ENCODE measurements at regions of chr3 and their contacts with region 1.

Region 1: GRCh38 chr3:377158-377561 is 180.6 kb downstream of the CHL1 start:
- DNase-seq: no peak
- ATAC-seq: peak; percentile 52
- H3K4me3 Mint-ChIP-seq: no peak overlapping the region
- H3K27ac Mint-ChIP-seq: no peak overlapping the region
- H3K4me1 Mint-ChIP-seq: peaks cover 2% of the 10 kb centered on the region
- H3K27me3 Mint-ChIP-seq: peaks cover 3% of the 10 kb centered on the region
- CTCF ChIP-seq: no peak

Region 2: GRCh38 chr3:46576-46975 is 330.6 kb before region 1 on chr3:
- CTCF ChIA-PET with region 1: interaction called, 18 read pairs
- POLR2A ChIA-PET with region 1: no interaction called
- intact Hi-C with region 1: loop called (anchors 1 kb)
- DNase-seq: no peak
- ATAC-seq: no peak
- H3K4me3 Mint-ChIP-seq: no peak overlapping the region
- H3K27ac Mint-ChIP-seq: no peak overlapping the region
- H3K4me1 Mint-ChIP-seq: no peaks in the 10 kb centered on the region
- H3K27me3 Mint-ChIP-seq: no peaks in the 10 kb centered on the region
- CTCF ChIP-seq: no peak

Region 3: DNA sequence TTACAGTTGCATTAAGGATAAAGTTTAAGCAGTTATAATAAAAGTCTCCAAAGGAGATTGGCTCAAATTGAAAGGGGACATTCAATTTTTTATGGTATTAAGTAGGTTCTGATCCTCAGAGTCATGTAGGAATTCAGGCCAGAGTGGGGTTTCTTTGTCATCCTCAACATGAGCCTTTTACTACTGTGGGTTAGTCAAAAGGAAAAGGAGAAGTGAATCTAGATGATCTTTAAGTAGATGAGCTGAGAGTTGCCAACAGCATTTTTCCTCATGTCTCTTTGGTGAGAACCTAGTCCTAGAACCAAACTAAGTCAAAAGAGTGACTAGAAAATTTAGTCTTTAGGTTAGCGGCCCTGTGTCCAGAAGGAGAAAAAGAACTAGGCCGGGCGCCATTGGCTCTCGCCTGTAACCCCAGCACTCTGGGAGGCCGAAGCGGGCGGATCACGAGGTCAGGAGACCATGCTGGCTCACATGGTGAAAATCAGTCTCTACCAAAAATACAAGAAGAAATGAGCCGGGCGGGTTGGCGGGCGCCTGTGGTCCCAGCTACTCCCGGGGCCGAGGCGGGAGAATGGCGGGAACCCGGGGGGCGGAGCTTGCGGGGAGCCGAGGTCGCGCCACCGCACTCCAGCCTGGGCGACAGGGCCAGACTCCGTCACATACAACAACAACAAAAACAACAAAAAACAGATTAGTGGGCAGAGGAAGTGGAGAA is 184.8 kb before region 1 on chr3:
- CTCF ChIA-PET with region 1: no interaction called
- POLR2A ChIA-PET with region 1: no interaction called
- intact Hi-C with region 1: no loop called
- DNase-seq: no peak
- ATAC-seq: peak; percentile 71
- H3K4me3 Mint-ChIP-seq: peak overlapping the region; percentile 50
- H3K27ac Mint-ChIP-seq: peak overlapping the region; percentile 79
- H3K4me1 Mint-ChIP-seq: peaks cover 13% of the 10 kb centered on the region
- H3K27me3 Mint-ChIP-seq: peaks cover 9% of the 10 kb centered on the region
- CTCF ChIP-seq: no peak